Ovary (tissue), 10 donors: ENCODE measurements at regions of chr3 and their contacts with region 1.

Region 1: DNA sequence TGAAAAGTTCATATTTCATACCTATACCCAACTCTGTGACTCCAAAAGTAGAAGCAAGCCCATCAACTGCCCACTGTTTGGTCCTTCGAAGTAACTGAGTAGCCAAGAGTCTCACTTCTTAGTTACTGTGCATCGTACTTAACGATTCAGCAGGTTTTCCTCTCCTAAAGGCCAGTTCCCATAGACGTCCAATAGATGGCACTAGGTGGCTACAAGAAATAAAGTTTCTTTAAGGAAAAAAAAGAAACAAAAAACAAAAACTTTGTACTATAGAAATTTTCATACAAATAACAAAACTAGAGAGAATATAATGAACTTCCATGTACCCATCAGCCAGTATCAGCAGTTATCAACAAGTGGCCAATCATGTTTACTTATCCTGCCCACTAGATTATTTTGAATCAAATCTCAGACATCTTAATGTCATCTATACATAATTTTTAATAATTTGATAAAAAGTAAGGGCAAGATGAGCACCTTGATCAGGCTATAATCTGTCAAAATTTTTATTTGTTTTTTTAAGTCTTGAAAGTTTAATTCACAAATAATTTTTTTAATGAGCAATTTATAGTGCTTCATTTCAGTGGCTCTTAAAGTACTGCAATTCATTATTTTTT is 63.8 kb upstream of the ACP3 start:
- DNase-seq: peak in 1 of 5 donors; percentile 42
- H3K4me3 ChIP-seq: no peak overlapping the region
- H3K27ac ChIP-seq: no peak overlapping the region
- H3K4me1 ChIP-seq: no peaks in the 10 kb centered on the region
- H3K27me3 ChIP-seq: no peaks in the 10 kb centered on the region
- CTCF ChIP-seq: peak; percentile 29 to 68 (median 61)
- EP300 ChIP-seq: no peak
- POLR2A ChIP-seq: no peak

Region 2: GRCh38 chr3:131110087-131110486 is 1143.3 kb before region 1 on chr3:
- intact Hi-C with region 1: no loop called
- DNase-seq: no peak
- H3K4me3 ChIP-seq: no peak overlapping the region
- H3K27ac ChIP-seq: no peak overlapping the region
- H3K4me1 ChIP-seq: no peaks in the 10 kb centered on the region
- H3K27me3 ChIP-seq: no peaks in the 10 kb centered on the region
- CTCF ChIP-seq: no peak
- EP300 ChIP-seq: no peak
- POLR2A ChIP-seq: no peak

Region 3: GRCh38 chr3:132311316-132311715 is 57.9 kb after region 1 on chr3:
- intact Hi-C with region 1: no loop called
- DNase-seq: no peak
- H3K4me3 ChIP-seq: no peak overlapping the region
- H3K27ac ChIP-seq: no peak overlapping the region
- H3K4me1 ChIP-seq: peaks cover 2% of the 10 kb centered on the region
- H3K27me3 ChIP-seq: no peaks in the 10 kb centered on the region
- CTCF ChIP-seq: no peak
- EP300 ChIP-seq: no peak
- POLR2A ChIP-seq: no peak

Region 4: DNA sequence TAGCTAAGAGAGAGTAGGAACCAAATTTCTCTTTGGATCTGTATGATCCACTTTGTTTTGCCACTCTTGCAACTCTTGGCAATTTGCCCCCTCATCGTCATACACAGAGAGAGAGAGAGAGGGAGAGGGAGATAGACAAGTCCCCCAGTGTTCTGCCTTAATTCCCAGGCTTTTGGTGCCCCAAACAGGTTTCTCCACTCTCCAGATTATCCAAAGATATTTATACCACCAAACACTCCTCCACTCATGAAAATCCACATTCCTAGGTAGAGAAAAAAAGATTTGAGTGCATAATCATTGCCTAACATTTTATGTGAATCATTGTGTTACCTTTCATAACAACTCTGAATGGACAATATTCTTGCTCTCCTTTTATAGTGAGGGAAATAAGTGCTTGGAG is 79.1 kb after region 1 on chr3:
- intact Hi-C with region 1: loop called in 1 of 4 experiments (anchors 10 kb)
- DNase-seq: no peak
- H3K4me3 ChIP-seq: no peak overlapping the region
- H3K27ac ChIP-seq: no peak overlapping the region
- H3K4me1 ChIP-seq: no peaks in the 10 kb centered on the region
- H3K27me3 ChIP-seq: no peaks in the 10 kb centered on the region
- CTCF ChIP-seq: no peak
- EP300 ChIP-seq: no peak
- POLR2A ChIP-seq: no peak

Region 5: GRCh38 chr3:132343018-132343612 is 89.7 kb after region 1 on chr3:
- intact Hi-C with region 1: loop called (anchors 5 to 10 kb)
- DNase-seq: peak in 4 of 5 donors; percentile 18 to 60 (median 30)
- H3K4me3 ChIP-seq: no peak overlapping the region
- H3K27ac ChIP-seq: no peak overlapping the region
- H3K4me1 ChIP-seq: no peaks in the 10 kb centered on the region
- H3K27me3 ChIP-seq: no peaks in the 10 kb centered on the region
- CTCF ChIP-seq: peak; percentile 62 to 91 (median 82)
- EP300 ChIP-seq: no peak
- POLR2A ChIP-seq: no peak

Region 6: DNA sequence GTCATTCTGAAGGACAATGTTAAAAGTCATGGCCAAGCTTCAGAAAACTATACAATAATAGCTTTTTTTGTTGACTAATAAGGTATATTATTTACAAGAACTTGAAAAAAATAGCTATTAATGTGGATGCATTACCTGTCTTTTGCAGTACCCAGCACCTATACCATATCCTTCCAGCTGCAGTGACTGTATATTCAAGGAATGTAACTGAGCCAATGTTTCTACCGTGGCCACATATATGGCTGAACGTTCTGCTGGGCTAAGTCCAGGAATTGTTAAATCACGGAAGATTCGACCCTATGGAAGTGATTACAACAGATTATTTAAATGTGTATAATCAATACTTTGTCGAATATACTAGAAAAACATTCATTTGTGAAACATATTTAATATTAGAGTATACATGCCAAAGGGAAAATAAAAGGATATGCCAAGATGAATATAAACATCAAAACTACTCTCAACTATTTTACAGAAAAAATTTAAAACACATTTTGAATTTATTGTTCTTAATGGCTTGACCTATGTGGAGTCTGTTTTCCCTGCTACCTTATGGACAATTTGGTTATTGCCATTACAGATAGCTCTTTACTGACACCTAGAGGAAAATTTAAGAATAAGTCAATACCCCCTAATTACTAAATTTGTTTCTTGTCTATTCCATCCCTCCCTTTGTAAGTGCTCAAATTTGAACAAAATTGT is 388.6 kb after region 1 on chr3:
- intact Hi-C with region 1: loop called in 1 of 4 experiments (anchors 10 kb)
- DNase-seq: no peak
- H3K4me3 ChIP-seq: no peak overlapping the region
- H3K27ac ChIP-seq: no peak overlapping the region
- H3K4me1 ChIP-seq: no peaks in the 10 kb centered on the region
- H3K27me3 ChIP-seq: no peaks in the 10 kb centered on the region
- CTCF ChIP-seq: peak; percentile 61 to 82 (median 67)
- EP300 ChIP-seq: no peak
- POLR2A ChIP-seq: no peak

Region 7: GRCh38 chr3:132911736-132912414 is 658.5 kb after region 1 on chr3:
- intact Hi-C with region 1: no loop called
- DNase-seq: no peak
- H3K4me3 ChIP-seq: no peak overlapping the region
- H3K27ac ChIP-seq: no peak overlapping the region
- H3K4me1 ChIP-seq: no peaks in the 10 kb centered on the region
- H3K27me3 ChIP-seq: no peaks in the 10 kb centered on the region
- CTCF ChIP-seq: no peak
- EP300 ChIP-seq: no peak
- POLR2A ChIP-seq: no peak